CD4-positive, alpha-beta memory T cell (primary cell): ENCODE measurements at regions of chr1 and their contacts with region 1.

Region 1: DNA sequence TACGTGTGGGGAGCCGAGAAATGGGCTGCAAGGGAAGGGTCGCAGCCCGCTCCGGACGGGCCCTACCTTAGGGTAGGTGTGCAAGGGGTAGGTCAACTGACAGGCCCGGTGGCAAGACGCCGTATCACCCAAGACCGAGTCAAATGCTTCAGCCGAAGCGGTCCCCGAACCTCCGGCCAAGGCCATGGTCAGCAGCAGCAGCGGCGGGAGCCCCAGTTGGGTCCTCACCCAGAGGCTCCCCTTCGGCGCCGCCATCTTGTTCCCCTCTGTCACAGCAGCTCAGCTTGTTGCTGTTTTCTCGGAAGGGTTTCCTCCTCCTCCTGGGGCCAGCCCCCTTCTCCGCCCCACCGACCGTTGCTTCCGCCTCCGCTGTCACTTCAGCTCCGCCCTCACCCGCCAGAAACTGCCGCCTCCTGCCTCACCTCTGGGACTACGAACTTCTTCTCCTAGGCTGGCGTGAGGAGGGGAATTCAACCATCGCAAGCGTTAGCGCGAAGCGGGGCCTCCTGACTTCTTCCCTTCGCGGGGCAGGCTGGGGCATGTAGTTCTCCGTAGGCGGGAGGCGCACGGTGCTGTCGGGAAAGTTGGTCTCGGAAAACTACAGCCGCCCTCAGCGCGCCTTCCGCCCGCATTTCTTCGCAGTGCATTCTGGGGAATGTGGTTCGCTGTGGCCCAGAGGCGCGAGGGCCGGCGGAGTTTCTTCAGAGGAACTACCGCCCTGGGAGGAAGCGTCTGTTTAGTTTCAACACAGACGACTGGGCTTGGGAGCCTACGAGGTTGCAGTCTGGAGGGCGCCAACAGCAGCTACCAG is at the starts of genes TCEANC2 and TMEM59:
- DNase-seq: peak; percentile 97 to 100 (median 99)
- H3K4me3 ChIP-seq: peak within 1 kb of the TSS; percentile 98 to 99
- H3K4me3 Mint-ChIP-seq: no peak within 1 kb of the TSS
- H3K27ac ChIP-seq: peak within 1 kb of the TSS; percentile 88
- H3K27ac Mint-ChIP-seq: no peak within 1 kb of the TSS
- H3K4me1 ChIP-seq: peaks cover 59% of the 10 kb centered on the region
- H3K4me1 Mint-ChIP-seq: peaks cover 23 to 49% (median 37%) of the 10 kb centered on the region in 4 donors
- H3K27me3 ChIP-seq: no peaks in the 10 kb centered on the region
- H3K27me3 Mint-ChIP-seq: no peaks in the 10 kb centered on the region
- total RNA-seq, gene TCEANC2: 12.1 to 13.1 TPM
- total RNA-seq, gene TMEM59: 212 to 222 TPM

Region 2: DNA sequence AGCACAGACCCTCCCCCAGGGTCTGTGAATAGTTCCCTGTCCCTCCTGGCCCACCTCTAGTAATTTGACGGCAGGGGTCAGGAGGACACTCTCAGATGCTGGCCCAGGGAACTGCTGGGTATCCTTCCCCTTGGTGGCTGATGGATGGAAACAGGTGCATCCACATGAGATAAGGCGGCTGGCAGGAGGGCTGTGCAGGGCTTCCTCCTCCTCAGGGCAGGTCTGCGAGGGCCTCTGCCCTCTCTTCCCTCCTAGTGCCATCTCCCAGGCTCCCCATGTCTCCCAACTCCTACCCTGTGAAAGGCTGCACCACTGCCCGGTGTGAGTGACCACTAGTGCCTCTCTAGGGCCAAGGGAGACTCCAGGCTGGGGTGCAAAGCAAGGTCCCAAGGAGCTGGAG is 438.0 kb before region 1 on chr1:
- CTCF ChIA-PET with region 1: no interaction called
- POLR2A ChIA-PET with region 1: no interaction called
- intact Hi-C with region 1: no loop called
- DNase-seq: no peak
- H3K4me3 ChIP-seq: no peak overlapping the region
- H3K4me3 Mint-ChIP-seq: no peak overlapping the region
- H3K27ac ChIP-seq: no peak overlapping the region
- H3K27ac Mint-ChIP-seq: no peak overlapping the region
- H3K4me1 ChIP-seq: no peaks in the 10 kb centered on the region
- H3K4me1 Mint-ChIP-seq: no peaks in the 10 kb centered on the region
- H3K27me3 ChIP-seq: no peaks in the 10 kb centered on the region
- H3K27me3 Mint-ChIP-seq: peaks cover 3 to 6% of the 10 kb centered on the region in 2 donors

Region 3: GRCh38 chr1:53837924-53838652 is 215.1 kb before region 1 on chr1 and contains the start of gene NDC1:
- CTCF ChIA-PET with region 1: no interaction called
- POLR2A ChIA-PET with region 1: interaction called, 10 read pairs
- intact Hi-C with region 1: loop called (anchors 1 kb)
- DNase-seq: peak; percentile 92 to 96 (median 93)
- H3K4me3 ChIP-seq: peak within 1 kb of the TSS; percentile 83 to 87
- H3K4me3 Mint-ChIP-seq: peak within 1 kb of the TSS; percentile 91 to 99 (median 98)
- H3K27ac ChIP-seq: peak within 1 kb of the TSS; percentile 95
- H3K27ac Mint-ChIP-seq: peak within 1 kb of the TSS; percentile 97 to 99 (median 98)
- H3K4me1 ChIP-seq: peaks cover 5% of the 10 kb centered on the region
- H3K4me1 Mint-ChIP-seq: peaks cover 15 to 38% (median 24%) of the 10 kb centered on the region in 4 donors
- H3K27me3 ChIP-seq: no peaks in the 10 kb centered on the region
- H3K27me3 Mint-ChIP-seq: peaks cover 0 to 2% of the 10 kb centered on the region in 2 donors
- total RNA-seq, gene NDC1: 10.9 to 11.0 TPM

Region 4: GRCh38 chr1:53889304-53890298 is 163.5 kb before region 1 on chr1 and contains the start of gene YIPF1:
- CTCF ChIA-PET with region 1: no interaction called
- POLR2A ChIA-PET with region 1: interaction called, 6 read pairs
- intact Hi-C with region 1: loop called (anchors 2 kb)
- DNase-seq: peak; percentile 82 to 86 (median 84)
- H3K4me3 ChIP-seq: peak within 1 kb of the TSS; percentile 59 to 79
- H3K4me3 Mint-ChIP-seq: peak within 1 kb of the TSS; percentile 92 to 98 (median 96)
- H3K27ac ChIP-seq: peak within 1 kb of the TSS; percentile 50
- H3K27ac Mint-ChIP-seq: peak within 1 kb of the TSS; percentile 89 to 96 (median 94)
- H3K4me1 ChIP-seq: peaks cover 28% of the 10 kb centered on the region
- H3K4me1 Mint-ChIP-seq: peaks cover 28 to 49% (median 38%) of the 10 kb centered on the region in 4 donors
- H3K27me3 ChIP-seq: no peaks in the 10 kb centered on the region
- H3K27me3 Mint-ChIP-seq: peaks cover 0 to 2% of the 10 kb centered on the region in 2 donors
- total RNA-seq, gene YIPF1: 14.8 to 15.2 TPM

Region 5: DNA sequence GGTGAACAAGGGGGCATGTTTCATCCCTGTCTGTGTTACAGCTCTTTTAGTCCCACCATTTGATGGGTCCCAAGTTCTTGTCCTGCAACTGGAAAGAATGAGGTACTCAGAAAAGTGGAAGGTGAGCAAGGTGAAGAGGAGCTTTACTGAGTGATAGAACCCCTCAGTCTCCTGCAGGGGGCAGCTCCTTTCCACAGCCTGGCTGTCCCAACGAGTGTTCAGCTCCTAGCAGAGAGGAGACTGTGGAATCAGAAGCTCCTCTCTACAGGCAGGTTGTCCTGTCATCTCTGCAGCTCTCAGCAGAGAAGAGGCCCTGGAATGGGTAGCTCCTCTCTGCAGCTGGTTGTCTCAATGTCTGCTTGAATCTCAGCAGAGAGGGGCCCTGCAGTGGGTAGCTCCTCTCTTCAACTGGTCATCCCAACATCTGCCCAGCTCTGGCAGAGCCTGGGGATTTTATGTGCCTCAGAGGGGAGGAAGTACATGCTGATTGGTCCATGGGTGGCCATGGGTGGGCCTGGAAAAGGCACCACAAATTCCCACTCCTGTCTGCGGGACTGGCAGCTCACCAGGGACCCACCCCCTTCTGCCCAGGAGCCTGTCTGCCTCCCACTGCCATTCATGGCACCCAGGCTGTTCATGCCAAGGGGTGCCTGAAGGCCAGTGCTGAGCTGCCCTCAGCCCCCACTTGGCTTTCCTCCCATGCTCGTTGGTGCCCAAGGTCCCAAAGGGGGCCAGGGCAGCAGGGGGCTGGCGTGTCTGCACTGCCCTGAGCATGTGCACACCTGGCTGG is 60.9 kb before region 1 on chr1:
- CTCF ChIA-PET with region 1: no interaction called
- POLR2A ChIA-PET with region 1: no interaction called
- intact Hi-C with region 1: no loop called
- DNase-seq: no peak
- H3K4me3 ChIP-seq: no peak overlapping the region
- H3K4me3 Mint-ChIP-seq: no peak overlapping the region
- H3K27ac ChIP-seq: no peak overlapping the region
- H3K27ac Mint-ChIP-seq: no peak overlapping the region
- H3K4me1 ChIP-seq: no peaks in the 10 kb centered on the region
- H3K4me1 Mint-ChIP-seq: peaks cover 0 to 10% (median 2%) of the 10 kb centered on the region in 4 donors
- H3K27me3 ChIP-seq: no peaks in the 10 kb centered on the region
- H3K27me3 Mint-ChIP-seq: peaks cover 0 to 3% of the 10 kb centered on the region in 2 donors

Region 6: GRCh38 chr1:54041806-54042205 is 11.3 kb before region 1 on chr1:
- CTCF ChIA-PET with region 1: no interaction called
- POLR2A ChIA-PET with region 1: interaction called, 16 read pairs
- intact Hi-C with region 1: no loop called
- DNase-seq: no peak
- H3K4me3 ChIP-seq: no peak overlapping the region
- H3K4me3 Mint-ChIP-seq: no peak overlapping the region
- H3K27ac ChIP-seq: no peak overlapping the region
- H3K27ac Mint-ChIP-seq: peak overlapping the region in 1 of 7 donors; percentile 68
- H3K4me1 ChIP-seq: peaks cover 4% of the 10 kb centered on the region
- H3K4me1 Mint-ChIP-seq: peaks cover 12 to 19% (median 18%) of the 10 kb centered on the region in 4 donors
- H3K27me3 ChIP-seq: no peaks in the 10 kb centered on the region
- H3K27me3 Mint-ChIP-seq: no peaks in the 10 kb centered on the region

Region 7: DNA sequence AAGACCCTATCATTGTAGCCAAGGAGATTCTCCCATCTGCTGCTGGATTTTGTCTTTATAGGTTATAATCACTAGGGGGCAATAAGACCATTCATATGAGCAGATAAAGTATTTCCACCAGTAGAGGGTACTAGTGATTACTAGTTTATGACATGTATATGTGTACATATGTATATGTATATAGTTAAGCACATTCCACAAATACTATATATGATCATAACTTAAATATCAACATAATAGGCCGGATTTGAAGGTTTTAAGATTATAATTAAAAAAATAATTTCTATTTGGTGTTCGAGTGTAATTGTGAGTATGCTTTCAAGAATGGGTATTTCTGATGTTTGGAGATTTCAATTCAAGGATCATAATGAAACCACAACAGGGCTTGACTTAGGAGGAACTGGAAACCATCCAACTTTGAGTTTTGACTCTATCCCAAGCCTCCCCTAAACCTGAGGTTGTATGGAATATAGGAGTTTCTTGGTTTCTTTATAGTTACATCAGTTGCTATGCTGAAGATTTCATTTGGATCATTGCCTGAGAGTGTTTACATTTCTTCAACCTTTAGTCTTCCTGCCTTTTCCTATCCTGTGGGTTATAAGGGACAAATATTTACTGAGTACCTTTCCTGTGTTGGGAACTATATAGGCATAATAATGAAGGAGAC is 17.2 kb after region 1 on chr1:
- CTCF ChIA-PET with region 1: interaction called, 3 read pairs
- POLR2A ChIA-PET with region 1: interaction called, 4 read pairs
- intact Hi-C with region 1: loop called (anchors 1 kb)
- DNase-seq: peak in 4 of 5 donors; percentile 55 to 61 (median 56)
- H3K4me3 ChIP-seq: no peak overlapping the region
- H3K4me3 Mint-ChIP-seq: peak overlapping the region in 1 of 8 donors; percentile 0
- H3K27ac ChIP-seq: no peak overlapping the region
- H3K27ac Mint-ChIP-seq: peak overlapping the region in 1 of 7 donors; percentile 2
- H3K4me1 ChIP-seq: no peaks in the 10 kb centered on the region
- H3K4me1 Mint-ChIP-seq: peaks cover 0 to 2% (median 0%) of the 10 kb centered on the region in 4 donors
- H3K27me3 ChIP-seq: no peaks in the 10 kb centered on the region
- H3K27me3 Mint-ChIP-seq: no peaks in the 10 kb centered on the region

Region 8: GRCh38 chr1:54764133-54764921 is 711.2 kb after region 1 on chr1 and contains the start of gene PARS2:
- CTCF ChIA-PET with region 1: no interaction called
- POLR2A ChIA-PET with region 1: interaction called, 7 read pairs
- intact Hi-C with region 1: loop called (anchors 1 kb)
- DNase-seq: peak; percentile 92 to 98 (median 98)
- H3K4me3 ChIP-seq: peak within 1 kb of the TSS; percentile 92 to 100
- H3K4me3 Mint-ChIP-seq: peak within 1 kb of the TSS; percentile 92 to 98 (median 94)
- H3K27ac ChIP-seq: peak within 1 kb of the TSS; percentile 71
- H3K27ac Mint-ChIP-seq: peak within 1 kb of the TSS; percentile 84 to 97 (median 93)
- H3K4me1 ChIP-seq: peaks cover 11% of the 10 kb centered on the region
- H3K4me1 Mint-ChIP-seq: peaks cover 8 to 27% (median 19%) of the 10 kb centered on the region in 4 donors
- H3K27me3 ChIP-seq: no peaks in the 10 kb centered on the region
- H3K27me3 Mint-ChIP-seq: no peaks in the 10 kb centered on the region
- total RNA-seq, gene PARS2: 5.0 to 6.0 TPM

Region 9: DNA sequence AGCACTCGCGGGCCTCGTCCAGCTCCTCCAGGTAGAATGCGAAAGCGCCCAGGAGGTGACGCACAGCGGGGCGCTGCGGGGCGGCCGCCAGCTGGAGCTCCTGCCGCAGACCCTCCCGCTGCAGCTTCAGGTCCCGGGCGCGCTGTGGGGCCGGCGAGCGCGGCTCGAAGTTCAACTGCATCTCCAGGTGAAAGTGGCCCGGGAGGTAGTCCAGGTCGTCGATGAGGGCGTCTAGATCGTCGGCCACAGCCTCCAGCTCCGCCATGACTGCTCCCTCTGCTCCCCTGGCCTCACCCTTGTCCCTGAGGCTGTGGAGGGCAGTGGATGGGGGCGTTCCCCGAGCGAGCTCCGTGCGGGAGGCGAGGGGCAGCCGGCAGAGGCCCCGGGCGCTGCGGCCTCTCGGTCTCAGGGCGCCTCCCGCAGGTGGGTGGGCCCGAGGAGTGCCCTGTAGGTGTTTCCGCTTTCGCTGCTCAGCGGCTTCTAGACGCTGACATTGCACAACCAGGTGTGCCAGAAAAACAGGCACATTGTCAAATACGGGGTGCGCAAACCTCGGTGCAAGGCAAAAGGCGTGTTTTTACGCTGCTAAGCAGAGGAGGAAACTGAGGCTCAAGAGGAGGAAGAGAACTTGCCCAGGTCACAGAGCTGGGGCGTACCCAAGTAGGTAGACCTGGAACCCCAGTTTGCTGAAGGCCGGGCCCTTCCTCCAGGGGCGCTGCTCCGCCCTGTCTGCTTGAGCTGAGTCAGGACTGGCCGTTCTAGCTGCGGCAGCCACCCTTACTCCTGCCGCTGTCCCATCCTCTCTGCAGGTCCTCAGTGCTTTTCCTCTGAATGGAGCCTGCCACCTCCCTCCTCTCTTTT is 748.0 kb after region 1 on chr1 and contains the start of gene TTC22:
- CTCF ChIA-PET with region 1: interaction called, 5 read pairs
- POLR2A ChIA-PET with region 1: interaction called, 18 read pairs
- intact Hi-C with region 1: loop called (anchors 5 kb)
- DNase-seq: peak; percentile 65 to 77 (median 70)
- H3K4me3 ChIP-seq: peak within 1 kb of the TSS; percentile 89 to 90
- H3K4me3 Mint-ChIP-seq: peak within 1 kb of the TSS; percentile 90 to 99 (median 96)
- H3K27ac ChIP-seq: peak within 1 kb of the TSS; percentile 68
- H3K27ac Mint-ChIP-seq: peak within 1 kb of the TSS; percentile 89 to 98 (median 96)
- H3K4me1 ChIP-seq: peaks cover 46% of the 10 kb centered on the region
- H3K4me1 Mint-ChIP-seq: peaks cover 40 to 73% (median 57%) of the 10 kb centered on the region in 4 donors
- H3K27me3 ChIP-seq: no peaks in the 10 kb centered on the region
- H3K27me3 Mint-ChIP-seq: no peaks in the 10 kb centered on the region
- total RNA-seq, gene TTC22: 18.6 to 19.0 TPM